Esophagus muscularis mucosa (tissue), 4 donors: ENCODE measurements at regions of chr2 and their contacts with region 1.

Region 1: GRCh38 chr2:234951664-234952269 is at the start of gene SH3BP4:
- DNase-seq: no peak
- H3K4me3 ChIP-seq: peak within 1 kb of the TSS; percentile 80 to 96 (median 90)
- H3K27ac ChIP-seq: peak within 1 kb of the TSS; percentile 85 to 88 (median 86)
- H3K4me1 ChIP-seq: peaks cover 22 to 63% (median 48%) of the 10 kb centered on the region in 4 donors
- H3K27me3 ChIP-seq: peaks cover 0 to 4% (median 0%) of the 10 kb centered on the region in 4 donors
- CTCF ChIP-seq: no peak
- EP300 ChIP-seq: no peak
- POLR2A ChIP-seq: no peak
- total RNA-seq, gene SH3BP4: 25.3 to 63.1 (median 48.4) TPM

Region 2: DNA sequence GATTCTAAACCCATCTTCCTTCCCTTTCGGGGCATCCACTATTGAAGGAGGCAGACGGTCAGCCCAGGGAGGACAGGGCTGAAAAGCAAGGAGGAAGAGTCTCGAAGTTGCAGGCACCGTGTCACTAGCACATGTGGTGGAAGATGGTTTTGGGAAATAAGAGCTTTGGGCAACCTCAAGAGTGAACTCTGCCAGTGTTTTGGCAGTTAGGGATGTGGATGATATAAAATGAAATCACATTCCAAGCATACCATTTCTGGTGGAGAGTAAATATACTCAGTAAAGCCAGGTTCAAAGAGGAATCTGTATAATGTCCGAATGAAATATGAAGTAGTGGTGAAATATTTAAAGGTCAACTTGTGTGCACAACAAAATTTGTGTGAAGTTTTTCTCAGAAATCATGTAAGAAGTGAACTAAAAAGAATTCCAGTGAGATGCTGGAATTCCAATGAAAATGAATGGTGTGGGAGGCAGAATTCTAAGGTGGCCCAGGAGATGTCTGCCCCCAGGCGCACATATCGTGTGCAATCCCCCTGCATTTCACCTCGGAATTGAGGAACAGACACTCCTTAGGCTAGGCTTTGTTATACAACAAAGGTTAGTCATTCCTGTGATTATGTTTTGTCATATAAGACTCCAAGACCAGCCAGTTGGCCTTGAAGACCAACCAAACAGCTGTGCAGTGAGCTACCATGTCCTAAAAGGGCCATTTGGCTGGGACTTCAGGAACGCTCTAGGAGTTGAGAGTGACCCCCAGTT is 147.1 kb after region 1 on chr2:
- intact Hi-C with region 1: loop called (anchors 10 kb)
- DNase-seq: no peak
- H3K4me3 ChIP-seq: no peak overlapping the region
- H3K27ac ChIP-seq: no peak overlapping the region
- H3K4me1 ChIP-seq: peaks cover 0 to 25% (median 16%) of the 10 kb centered on the region in 4 donors
- H3K27me3 ChIP-seq: no peaks in the 10 kb centered on the region
- CTCF ChIP-seq: no peak
- EP300 ChIP-seq: no peak
- POLR2A ChIP-seq: no peak

Region 3: GRCh38 chr2:235468978-235469655 is 517.4 kb after region 1 on chr2:
- intact Hi-C with region 1: no loop called
- DNase-seq: no peak
- H3K4me3 ChIP-seq: no peak overlapping the region
- H3K27ac ChIP-seq: peak overlapping the region in 3 of 4 donors; percentile 29 to 63 (median 44)
- H3K4me1 ChIP-seq: peaks cover 0 to 13% (median 11%) of the 10 kb centered on the region in 4 donors
- H3K27me3 ChIP-seq: no peaks in the 10 kb centered on the region
- CTCF ChIP-seq: no peak
- EP300 ChIP-seq: no peak
- POLR2A ChIP-seq: no peak